Activated CD8-positive, alpha-beta T cell treated with anti-CD3 and anti-CD28 coated beads for 36 hours (primary cell): ENCODE measurements at regions of chr9 and their contacts with region 1.

Region 1: GRCh38 chr9:120892748-120893610 is 16.0 kb upstream of the PHF19 start:
- DNase-seq: peak; percentile 83
- ATAC-seq: peak; percentile 38
- H3K4me3 Mint-ChIP-seq: peak overlapping the region; percentile 79
- H3K27ac Mint-ChIP-seq: peak overlapping the region; percentile 98
- H3K4me1 Mint-ChIP-seq: peaks cover 84% of the 10 kb centered on the region
- H3K27me3 Mint-ChIP-seq: no peaks in the 10 kb centered on the region
- CTCF ChIP-seq: no peak

Region 2: DNA sequence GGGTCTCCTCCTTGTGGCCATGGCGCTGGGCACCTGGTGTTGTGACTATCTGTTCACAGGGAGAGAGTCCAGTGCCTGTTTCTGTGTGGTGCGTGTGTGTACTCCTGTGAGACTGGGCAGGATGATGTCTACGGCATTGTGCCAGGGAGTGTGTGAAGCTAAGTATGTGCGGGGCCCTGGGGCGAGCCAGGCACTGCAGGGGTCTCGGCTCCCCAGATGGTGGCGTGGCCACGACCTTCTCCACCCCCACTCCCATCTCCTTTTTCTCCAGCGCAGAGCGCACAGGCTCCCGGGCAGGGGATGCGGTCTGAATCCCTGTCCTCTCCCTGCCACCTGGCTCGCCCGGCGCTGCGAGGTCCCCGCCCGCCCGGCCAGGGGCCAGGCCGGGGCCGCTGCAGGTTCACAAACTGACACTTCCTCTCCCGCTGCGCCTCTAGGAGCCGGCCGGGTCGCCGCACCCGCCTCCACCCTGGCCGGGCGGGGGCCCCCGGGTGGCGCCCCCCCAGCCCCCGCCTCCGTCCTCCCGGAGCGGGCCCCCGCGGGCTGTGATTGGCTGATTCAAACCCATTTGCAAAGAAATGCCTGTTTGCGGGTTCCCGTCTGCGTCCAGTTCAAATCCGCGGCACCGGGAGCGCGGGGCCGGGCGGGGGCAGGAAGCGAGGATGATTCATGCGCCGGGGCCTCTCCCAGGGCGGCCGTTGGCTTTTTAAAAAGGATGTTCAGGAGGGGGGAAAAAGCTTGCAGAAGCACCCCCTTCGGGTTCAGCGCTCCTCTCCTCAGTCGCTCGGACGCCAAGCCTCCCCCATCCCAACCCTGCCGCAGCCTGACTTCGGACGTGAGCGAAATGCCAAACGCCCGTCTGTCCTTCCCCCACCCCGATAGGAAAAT is 16.8 kb before region 1 on chr9:
- CTCF ChIA-PET with region 1: interaction called, 30 read pairs
- POLR2A ChIA-PET with region 1: interaction called, 2,439 read pairs
- intact Hi-C with region 1: loop called (anchors 2 kb)
- DNase-seq: peak; percentile 96
- ATAC-seq: peak; percentile 62
- H3K4me3 Mint-ChIP-seq: peak overlapping the region; percentile 91
- H3K27ac Mint-ChIP-seq: peak overlapping the region; percentile 93
- H3K4me1 Mint-ChIP-seq: peaks cover 75% of the 10 kb centered on the region
- H3K27me3 Mint-ChIP-seq: no peaks in the 10 kb centered on the region
- CTCF ChIP-seq: no peak